MCF 10A (cell line): ENCODE measurements at regions of chr16 and their contacts with region 1.

Region 1: DNA sequence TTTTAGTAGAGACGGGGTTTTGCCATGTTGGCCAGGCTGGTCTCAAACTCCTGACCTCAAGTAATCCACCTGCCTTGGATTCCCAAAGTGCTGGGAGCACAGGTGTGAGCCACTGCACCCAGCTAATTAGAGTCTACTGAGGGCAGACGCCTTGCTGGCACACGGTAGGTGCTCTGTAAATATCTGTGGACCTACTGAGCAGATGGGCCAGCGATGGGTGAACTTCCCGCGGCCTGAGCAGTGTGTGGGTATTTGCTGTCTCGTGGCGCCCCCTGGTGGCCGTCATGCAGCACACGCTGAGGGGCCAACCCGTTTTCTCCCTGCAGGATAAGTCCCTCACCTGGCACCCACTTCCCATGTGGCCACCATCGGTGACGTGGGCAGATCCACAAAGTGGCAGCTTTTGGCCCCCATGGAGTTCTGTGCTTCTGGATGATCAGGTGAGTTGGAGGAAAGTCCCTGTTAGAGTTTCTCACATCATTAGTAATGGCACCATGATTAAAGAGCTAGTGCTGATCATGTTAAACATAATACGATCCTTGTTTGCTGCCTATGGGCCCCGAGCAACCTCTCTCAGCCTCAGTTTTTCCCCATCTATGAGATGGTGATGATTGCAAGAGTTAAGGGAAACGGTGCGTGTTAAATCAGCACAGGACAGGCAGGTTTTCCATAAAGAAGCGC is 40.7 kb downstream of the ZDHHC7 start:
- DNase-seq: peak; percentile 76
- H3K4me3 Mint-ChIP-seq: no peak overlapping the region
- H3K27ac Mint-ChIP-seq: no peak overlapping the region
- H3K4me1 Mint-ChIP-seq: no peaks in the 10 kb centered on the region
- H3K27me3 Mint-ChIP-seq: peaks cover 5% of the 10 kb centered on the region
- CTCF ChIP-seq: peak; percentile 90

Region 2: GRCh38 chr16:84754353-84754856 is 216.2 kb before region 1 on chr16:
- CTCF ChIA-PET with region 1: interaction called, 137 read pairs
- POLR2A ChIA-PET with region 1: interaction called, 8 read pairs
- intact Hi-C with region 1: loop called (anchors 1 kb)
- DNase-seq: peak; percentile 81
- H3K4me3 Mint-ChIP-seq: no peak overlapping the region
- H3K27ac Mint-ChIP-seq: peak overlapping the region; percentile 57
- H3K4me1 Mint-ChIP-seq: peaks cover 18% of the 10 kb centered on the region
- H3K27me3 Mint-ChIP-seq: no peaks in the 10 kb centered on the region
- CTCF ChIP-seq: peak; percentile 67

Region 3: GRCh38 chr16:84925092-84925772 is 45.4 kb before region 1 on chr16:
- CTCF ChIA-PET with region 1: interaction called, 63 read pairs
- POLR2A ChIA-PET with region 1: no interaction called
- intact Hi-C with region 1: loop called (anchors 1 kb)
- DNase-seq: peak; percentile 59
- H3K4me3 Mint-ChIP-seq: no peak overlapping the region
- H3K27ac Mint-ChIP-seq: no peak overlapping the region
- H3K4me1 Mint-ChIP-seq: peaks cover 6% of the 10 kb centered on the region
- H3K27me3 Mint-ChIP-seq: no peaks in the 10 kb centered on the region
- CTCF ChIP-seq: peak; percentile 91

Region 4: GRCh38 chr16:84982434-84982833 is 11.8 kb after region 1 on chr16:
- CTCF ChIA-PET with region 1: interaction called, 12 read pairs
- POLR2A ChIA-PET with region 1: interaction called, 3 read pairs
- intact Hi-C with region 1: no loop called
- DNase-seq: no peak
- H3K4me3 Mint-ChIP-seq: no peak overlapping the region
- H3K27ac Mint-ChIP-seq: peak overlapping the region; percentile 77
- H3K4me1 Mint-ChIP-seq: peaks cover 28% of the 10 kb centered on the region
- H3K27me3 Mint-ChIP-seq: no peaks in the 10 kb centered on the region
- CTCF ChIP-seq: no peak

Region 5: DNA sequence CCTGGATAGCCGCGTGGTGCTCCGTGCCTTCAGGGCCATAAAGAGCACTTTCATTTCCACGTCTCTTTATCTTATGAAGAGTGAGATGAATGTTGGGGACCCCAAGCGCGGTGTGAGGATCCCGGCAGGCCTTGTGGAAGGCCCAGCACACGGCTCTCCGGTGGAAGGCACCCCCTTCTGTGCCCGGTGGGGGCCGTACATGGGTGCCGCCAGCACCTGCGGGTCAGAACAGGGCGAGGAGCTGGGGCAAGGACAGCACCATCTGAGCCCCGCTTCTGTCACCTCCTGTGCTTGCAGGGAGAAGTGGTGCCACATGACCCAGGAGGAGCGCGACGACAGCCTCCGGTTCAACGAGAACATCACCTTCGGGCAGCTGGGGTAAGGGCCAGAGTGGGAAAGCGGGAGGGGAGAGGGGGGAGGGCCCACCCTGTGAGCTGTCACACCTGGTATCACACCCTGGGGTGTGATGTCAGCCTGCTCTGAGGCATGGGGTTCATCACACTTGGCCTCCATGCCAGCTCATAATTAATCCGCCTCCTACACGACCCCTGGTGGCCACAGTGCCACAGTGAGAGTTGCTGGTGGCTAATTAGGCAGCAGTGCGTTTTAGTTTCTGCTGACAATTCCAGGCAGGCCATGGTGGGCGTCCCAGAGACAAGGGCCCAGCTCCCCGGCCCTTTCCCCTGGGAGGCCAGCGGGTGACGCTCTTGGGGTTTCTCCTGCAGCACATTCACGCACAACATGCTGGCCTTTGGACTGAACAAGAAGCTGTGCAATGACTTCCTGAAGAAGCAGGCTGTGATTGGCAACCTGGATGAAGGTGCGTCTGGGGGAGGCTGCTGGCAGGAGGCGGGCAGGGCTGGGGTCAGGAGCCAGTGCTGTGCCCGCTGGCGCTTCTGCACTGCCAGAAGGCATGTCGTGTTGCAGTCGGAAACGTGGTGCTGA is 116.0 kb after region 1 on chr16:
- CTCF ChIA-PET with region 1: interaction called, 14 read pairs
- POLR2A ChIA-PET with region 1: no interaction called
- intact Hi-C with region 1: loop called (anchors 5 kb)
- DNase-seq: peak; percentile 75
- H3K4me3 Mint-ChIP-seq: no peak overlapping the region
- H3K27ac Mint-ChIP-seq: no peak overlapping the region
- H3K4me1 Mint-ChIP-seq: no peaks in the 10 kb centered on the region
- H3K27me3 Mint-ChIP-seq: no peaks in the 10 kb centered on the region
- CTCF ChIP-seq: peak; percentile 67